ENCODE measurements at regions of chr3 and their contacts with region 1.

Region 1: GRCh38 chr3:188052169-188053030 is 101.6 kb upstream of the LPP start:
- DNase-seq: peak; percentile 93 to 95 (median 94)
- H3K4me3 ChIP-seq: peak overlapping the region; percentile 13
- H3K27ac ChIP-seq: peak overlapping the region; percentile 53 to 85
- H3K4me1 ChIP-seq: peaks cover 15% of the 10 kb centered on the region
- H3K27me3 ChIP-seq: no peaks in the 10 kb centered on the region
- CTCF ChIP-seq: peak; percentile 71 to 85 (median 85)
- EP300 ChIP-seq: no peak
- POLR2A ChIP-seq: no peak

Region 2: GRCh38 chr3:187738331-187739093 is 313.9 kb before region 1 on chr3:
- intact Hi-C with region 1: loop called in 3 of 4 experiments (anchors 2 to 10 kb)
- DNase-seq: peak; percentile 87 to 95 (median 91)
- H3K4me3 ChIP-seq: peak overlapping the region; percentile 88
- H3K27ac ChIP-seq: peak overlapping the region; percentile 84 to 100
- H3K4me1 ChIP-seq: peaks cover 7% of the 10 kb centered on the region
- H3K27me3 ChIP-seq: no peaks in the 10 kb centered on the region
- CTCF ChIP-seq: peak; percentile 43 to 77 (median 61)
- EP300 ChIP-seq: peak; percentile 53
- POLR2A ChIP-seq: peak; percentile 36

Region 3: DNA sequence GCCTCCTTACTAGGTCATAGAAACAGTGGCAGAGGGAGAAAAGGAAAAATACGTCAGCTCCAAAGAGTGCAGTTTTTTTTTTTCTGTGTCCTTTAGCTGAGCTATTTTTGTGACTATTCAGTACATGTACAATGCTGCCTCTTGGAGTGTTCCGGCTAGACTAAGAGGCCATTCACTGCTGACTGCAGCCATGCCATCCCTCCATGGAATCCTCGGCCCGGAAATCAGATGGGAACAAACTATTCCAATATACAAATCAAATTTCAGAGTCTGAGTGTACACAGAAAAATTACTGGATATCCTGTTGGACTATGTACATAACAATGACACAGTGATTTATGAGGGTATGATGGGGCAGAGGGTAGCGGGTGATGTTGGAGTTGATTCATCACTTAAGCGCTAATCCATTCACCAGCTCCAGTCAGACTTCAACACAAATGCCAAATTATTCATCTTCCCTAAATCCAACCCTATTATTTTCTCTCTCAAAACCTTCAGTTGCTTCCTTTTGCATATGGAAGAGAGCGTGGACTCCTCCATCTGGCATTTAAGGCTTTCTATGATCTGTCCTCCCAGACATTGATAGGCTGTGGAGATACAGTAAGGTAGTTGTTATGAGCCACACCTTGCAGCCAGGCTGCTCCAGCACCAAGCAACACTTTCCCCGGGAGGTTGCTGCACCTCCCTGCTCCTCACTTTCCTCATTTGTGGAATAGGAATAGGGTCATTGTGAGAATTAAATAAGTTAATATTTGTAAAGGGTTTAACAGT is 210.7 kb after region 1 on chr3:
- intact Hi-C with region 1: loop called in 1 of 4 experiments (anchors 5 kb)
- DNase-seq: no peak
- H3K4me3 ChIP-seq: no peak overlapping the region
- H3K27ac ChIP-seq: no peak overlapping the region
- H3K4me1 ChIP-seq: peaks cover 15% of the 10 kb centered on the region
- H3K27me3 ChIP-seq: no peaks in the 10 kb centered on the region
- CTCF ChIP-seq: no peak
- EP300 ChIP-seq: no peak
- POLR2A ChIP-seq: no peak

Region 4: DNA sequence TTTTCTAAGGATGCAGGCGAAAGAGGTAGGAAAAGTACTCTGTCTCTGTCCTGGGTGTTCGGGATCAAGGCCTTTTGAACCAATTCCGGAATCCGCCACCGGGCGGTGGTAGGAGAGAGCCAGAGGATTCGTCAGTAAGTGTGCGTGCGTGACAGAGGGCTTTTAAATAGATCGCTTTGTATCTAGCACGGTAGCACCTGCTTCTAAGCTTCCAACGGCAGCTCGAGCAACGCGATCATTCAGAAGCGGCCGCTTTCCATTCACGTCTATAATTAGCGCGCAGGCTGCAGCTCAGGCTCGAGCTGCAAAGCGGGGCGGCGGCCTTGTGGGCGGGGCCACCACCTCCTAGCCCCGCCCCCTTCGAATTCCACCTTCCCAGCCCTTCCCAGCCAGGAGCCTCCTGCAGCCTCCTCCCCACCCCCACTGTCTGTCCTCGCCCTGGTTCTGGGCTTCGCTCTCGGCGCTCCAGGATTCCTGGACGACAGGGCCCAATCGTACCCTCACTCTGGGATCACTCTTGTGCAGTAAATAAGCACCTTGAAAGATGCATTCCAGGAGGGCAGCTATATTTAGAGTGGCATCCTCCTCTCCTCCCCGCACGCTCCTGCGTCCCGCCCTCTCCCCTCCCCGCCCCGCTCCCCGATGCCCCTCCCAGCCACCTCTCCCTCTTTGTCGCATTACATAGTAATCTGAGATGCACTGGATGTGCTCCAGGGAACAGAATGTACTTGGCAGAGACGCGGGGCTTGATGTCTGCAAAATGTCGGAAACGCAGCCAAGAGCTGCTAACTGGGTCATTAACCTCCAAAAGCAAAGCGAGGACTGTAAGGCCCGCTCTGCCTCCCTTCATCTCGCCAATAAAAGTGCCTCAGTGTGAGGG is 895.2 kb after region 1 on chr3:
- intact Hi-C with region 1: loop called in 3 of 4 experiments (anchors 5 kb)
- DNase-seq: peak; percentile 94 to 99 (median 95)
- H3K4me3 ChIP-seq: peak overlapping the region; percentile 45
- H3K27ac ChIP-seq: peak overlapping the region; percentile 68 to 90
- H3K4me1 ChIP-seq: peaks cover 23% of the 10 kb centered on the region
- H3K27me3 ChIP-seq: no peaks in the 10 kb centered on the region
- CTCF ChIP-seq: peak; percentile 8 to 78 (median 58)
- EP300 ChIP-seq: peak; percentile 100
- POLR2A ChIP-seq: peak; percentile 67

Region 5: DNA sequence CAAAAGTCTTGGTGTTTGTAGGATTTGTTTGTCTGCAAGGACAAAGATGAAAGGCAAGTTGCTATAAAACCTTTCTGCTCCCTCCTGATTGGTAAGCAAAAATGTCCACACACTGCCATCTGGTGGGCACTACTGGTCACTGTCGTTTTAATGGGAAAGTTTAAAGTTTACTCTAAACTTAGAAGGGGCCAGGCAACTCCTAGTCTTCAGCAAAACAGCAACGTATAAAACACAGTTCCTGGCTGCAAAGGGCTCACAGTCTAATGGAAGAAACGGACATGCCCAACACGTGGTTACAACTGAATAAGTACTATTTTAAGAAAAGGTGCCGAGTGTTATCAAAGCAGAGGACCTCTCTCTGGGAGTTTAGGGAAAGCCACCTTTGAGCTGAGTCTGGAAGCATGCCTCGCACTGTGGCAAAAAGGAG is 1095.7 kb after region 1 on chr3:
- intact Hi-C with region 1: loop called in 2 of 4 experiments (anchors 5 to 10 kb)
- DNase-seq: peak; percentile 55 to 83 (median 71)
- H3K4me3 ChIP-seq: no peak overlapping the region
- H3K27ac ChIP-seq: no peak overlapping the region
- H3K4me1 ChIP-seq: peaks cover 4% of the 10 kb centered on the region
- H3K27me3 ChIP-seq: no peaks in the 10 kb centered on the region
- CTCF ChIP-seq: peak; percentile 71 to 90 (median 86)
- EP300 ChIP-seq: no peak
- POLR2A ChIP-seq: no peak

Measured in ovary (tissue), 10 donors.